HEK293 (cell line): ENCODE measurements at regions of chr16 and their contacts with region 1.

Region 1: DNA sequence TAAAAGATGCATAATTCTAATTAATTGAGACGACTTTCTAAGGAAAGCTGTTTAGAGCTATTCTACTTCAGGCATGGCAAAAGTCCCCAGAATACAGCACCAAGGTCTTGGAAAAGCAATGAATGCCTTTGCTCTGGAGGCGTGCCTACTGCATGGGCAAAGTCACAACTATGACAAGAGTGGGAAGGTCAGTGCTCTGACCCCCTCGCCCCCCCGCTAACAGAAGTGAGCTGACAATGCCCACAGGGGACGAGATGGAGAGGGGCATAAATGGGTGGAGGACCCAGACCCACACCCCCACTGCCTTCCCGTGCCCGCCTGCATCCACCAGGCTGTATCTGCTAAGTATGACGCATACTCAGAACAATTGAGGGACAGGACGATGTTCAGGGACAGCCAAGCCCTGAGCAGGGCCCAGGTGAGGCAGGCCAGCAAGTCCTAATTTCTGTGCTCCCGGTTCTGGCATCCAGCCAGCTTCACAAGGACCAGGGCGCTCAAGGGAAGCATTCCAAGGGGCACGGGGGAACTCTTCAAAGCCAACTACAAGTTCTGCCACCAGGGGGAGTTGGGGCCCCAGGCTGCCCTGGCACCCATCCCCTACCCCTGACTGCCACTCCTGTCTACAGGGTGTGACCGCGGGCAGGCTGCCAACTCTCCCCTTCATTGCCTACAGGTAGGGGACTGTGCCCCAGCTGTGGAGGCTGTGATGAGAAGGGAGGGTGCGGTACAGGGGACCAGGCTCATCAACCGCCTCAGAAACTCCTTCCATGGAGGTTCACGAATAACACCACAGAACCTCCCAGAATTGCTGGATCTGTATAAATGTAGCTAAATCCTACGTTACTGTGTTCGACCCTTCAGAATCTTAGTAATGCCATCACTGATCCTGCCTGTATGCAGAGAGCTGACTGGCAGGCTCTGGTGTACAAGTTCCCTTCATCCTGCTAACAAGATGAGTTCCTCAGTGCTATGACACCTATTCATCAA is 20.8 kb downstream of the NPRL3 start:
- H3K4me3 ChIP-seq: no peak overlapping the region
- H3K27ac ChIP-seq: no peak overlapping the region
- H3K4me1 ChIP-seq: no peaks in the 10 kb centered on the region; the same call in 1 of the 2 replicates
- CTCF ChIP-seq: peak; percentile 69

Region 2: DNA sequence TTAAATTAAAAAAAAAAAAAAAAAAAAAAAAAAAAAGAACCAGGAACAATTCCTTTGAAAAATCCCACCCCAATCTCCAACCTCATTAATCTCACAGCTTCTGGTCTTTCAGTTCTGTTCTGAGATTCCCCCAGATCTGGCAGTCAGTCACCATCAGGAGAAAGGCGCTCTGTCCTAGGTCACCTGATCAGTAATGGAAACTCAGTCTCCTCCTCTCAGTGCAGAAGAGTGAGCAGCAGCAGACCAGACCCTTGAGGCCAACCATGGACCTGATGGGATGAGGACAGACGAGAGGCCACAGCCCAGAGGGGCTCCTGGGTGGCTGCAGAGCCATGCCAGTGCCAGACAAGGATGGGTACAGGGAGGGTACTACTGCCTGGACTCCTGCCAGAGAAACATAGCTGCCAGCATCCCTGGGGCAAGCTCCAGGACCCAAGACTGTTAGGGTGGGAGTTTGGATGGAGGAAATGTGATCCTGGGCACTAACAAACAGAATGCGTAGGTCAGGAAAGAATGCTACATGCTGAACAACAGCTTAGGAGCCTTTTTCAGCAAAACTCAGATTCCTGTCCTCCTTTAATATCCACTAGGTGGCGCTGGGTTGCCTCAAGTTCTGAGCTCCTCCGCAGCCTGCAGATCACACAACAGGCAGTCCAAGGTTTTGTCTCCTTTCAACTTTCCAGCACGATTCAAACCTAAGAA is 10.9 kb before region 1 on chr16:
- CTCF ChIA-PET with region 1: interaction called, 73 read pairs
- POLR2A ChIA-PET with region 1: no interaction called
- H3K4me3 ChIP-seq: no peak overlapping the region
- H3K27ac ChIP-seq: no peak overlapping the region
- H3K4me1 ChIP-seq: no peaks in the 10 kb centered on the region
- CTCF ChIP-seq: peak; percentile 75

Region 3: DNA sequence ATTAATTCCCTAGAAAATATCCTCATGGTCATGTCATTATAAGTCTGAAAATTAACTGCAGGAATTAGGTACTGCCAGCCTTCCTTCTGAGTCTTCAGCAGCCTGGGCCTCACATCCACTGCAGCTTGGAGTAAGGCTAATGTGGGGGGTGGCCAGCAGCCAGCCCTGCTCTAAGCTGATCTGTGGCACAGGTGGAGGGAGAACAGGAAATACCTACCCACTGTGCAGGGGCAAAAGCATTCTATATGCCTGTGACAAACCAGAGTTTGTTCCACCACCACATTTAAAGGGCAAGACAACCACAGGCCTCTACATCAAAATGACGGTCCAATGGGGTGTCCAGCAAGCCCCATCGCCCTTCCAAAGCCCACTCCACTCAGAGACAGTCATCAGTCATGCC is 11.4 kb after region 1 on chr16:
- CTCF ChIA-PET with region 1: interaction called, 16 read pairs
- POLR2A ChIA-PET with region 1: no interaction called
- H3K4me3 ChIP-seq: no peak overlapping the region
- H3K27ac ChIP-seq: no peak overlapping the region
- H3K4me1 ChIP-seq: no peaks in the 10 kb centered on the region
- CTCF ChIP-seq: no peak

Region 4: GRCh38 chr16:154223-155030 is 36.8 kb after region 1 on chr16:
- CTCF ChIA-PET with region 1: interaction called, 10 read pairs
- POLR2A ChIA-PET with region 1: no interaction called
- H3K4me3 ChIP-seq: peak overlapping the region; percentile 36
- H3K27ac ChIP-seq: peak overlapping the region; percentile 34; the same call in 1 of the 2 replicates
- H3K4me1 ChIP-seq: no peaks in the 10 kb centered on the region
- CTCF ChIP-seq: 0 out of 2 replicates have a peak, but pooled peaks have one; percentile 14

Region 5: DNA sequence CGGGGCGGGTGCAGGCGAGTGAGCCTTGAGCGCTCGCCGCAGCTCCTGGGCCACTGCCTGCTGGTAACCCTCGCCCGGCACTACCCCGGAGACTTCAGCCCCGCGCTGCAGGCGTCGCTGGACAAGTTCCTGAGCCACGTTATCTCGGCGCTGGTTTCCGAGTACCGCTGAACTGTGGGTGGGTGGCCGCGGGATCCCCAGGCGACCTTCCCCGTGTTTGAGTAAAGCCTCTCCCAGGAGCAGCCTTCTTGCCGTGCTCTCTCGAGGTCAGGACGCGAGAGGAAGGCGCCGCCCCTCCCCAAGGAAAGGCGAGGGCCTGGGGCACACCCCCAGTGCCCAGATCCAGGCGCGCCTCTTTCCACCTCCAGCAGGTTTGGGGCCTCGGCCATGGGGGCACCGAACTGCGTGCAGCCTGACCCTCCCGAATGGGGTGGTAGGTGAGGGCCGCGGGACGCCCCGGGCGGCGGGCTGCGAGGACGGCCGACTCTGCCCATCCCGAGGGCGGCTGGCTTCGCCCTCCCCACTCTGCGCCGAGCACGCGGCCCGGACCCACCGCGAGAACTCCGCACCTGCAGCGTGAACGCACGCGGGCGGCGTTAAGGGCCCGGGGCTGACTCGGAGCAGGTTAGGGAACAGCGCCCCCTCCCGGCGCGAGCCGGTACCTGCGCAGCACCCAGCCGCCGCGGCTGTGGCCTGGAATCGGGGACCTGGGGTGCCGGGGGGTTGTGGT is 63.4 kb after region 1 on chr16:
- CTCF ChIA-PET with region 1: interaction called, 24 read pairs
- POLR2A ChIA-PET with region 1: no interaction called
- H3K4me3 ChIP-seq: no peak overlapping the region; the same call in 1 of the 2 replicates
- H3K27ac ChIP-seq: peak overlapping the region; percentile 25; the same call in 1 of the 2 replicates
- H3K4me1 ChIP-seq: peaks cover 3% of the 10 kb centered on the region; the same call in 1 of the 2 replicates
- CTCF ChIP-seq: peak; percentile 96

Region 6: DNA sequence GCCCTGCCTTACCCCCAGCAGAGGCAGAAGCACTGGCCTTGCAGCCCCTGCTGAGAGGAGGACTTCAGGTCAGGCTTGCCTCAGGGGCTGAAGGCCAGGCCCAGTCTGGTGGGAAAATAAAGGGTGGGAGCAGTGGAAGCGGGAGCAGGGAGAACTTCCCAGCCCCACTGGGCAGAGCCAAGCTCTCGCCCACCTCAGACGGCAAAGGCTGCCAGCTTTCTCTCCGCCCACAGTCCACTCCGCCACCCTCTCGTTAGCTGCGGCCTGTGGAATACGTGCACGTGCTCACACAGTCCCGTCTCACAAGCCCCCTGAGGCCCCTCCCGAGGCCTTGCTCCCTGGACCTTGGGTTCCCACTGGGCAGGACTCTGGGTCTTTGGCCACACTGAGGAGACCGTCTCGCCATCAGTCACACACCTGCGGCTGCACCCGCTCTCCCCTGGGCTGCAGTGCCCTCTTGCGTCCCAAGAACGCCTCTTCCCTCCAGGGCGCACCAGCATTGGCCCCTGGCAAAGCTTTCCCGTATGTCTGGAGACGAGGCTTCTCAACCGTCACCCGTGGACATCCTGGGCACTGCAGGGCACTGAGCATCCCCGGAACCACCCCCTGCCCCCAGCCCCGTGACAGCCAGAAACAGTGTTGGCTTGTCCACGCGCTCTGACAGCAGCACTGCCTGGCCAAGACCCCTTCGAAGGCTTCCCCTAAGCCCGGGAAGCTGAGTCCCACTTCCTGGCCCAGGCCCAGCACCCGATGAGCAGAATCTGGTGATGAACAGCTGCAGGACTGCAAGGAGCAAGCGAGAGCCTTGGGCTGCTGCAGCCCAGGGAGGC is 244.4 kb after region 1 on chr16:
- CTCF ChIA-PET with region 1: interaction called, 14 read pairs
- POLR2A ChIA-PET with region 1: no interaction called
- H3K4me3 ChIP-seq: no peak overlapping the region
- H3K27ac ChIP-seq: no peak overlapping the region
- H3K4me1 ChIP-seq: no peaks in the 10 kb centered on the region; the same call in 1 of the 2 replicates
- CTCF ChIP-seq: peak; percentile 95